ENCODE measurements at regions of chr14 and their contacts with region 1.

Region 1: GRCh38 chr14:71320107-71320733 is 413.0 kb downstream of the PCNX1 start:
- DNase-seq: peak; percentile 91 to 98
- H3K4me3 ChIP-seq: peak within 1 kb of the TSS; percentile 87 to 95
- H3K27ac ChIP-seq: peak within 1 kb of the TSS; percentile 94 to 99
- H3K4me1 ChIP-seq: peaks cover 0 to 8% of the 10 kb centered on the region in 2 donors
- H3K27me3 ChIP-seq: no peaks in the 10 kb centered on the region
- CTCF ChIP-seq: no peak

Region 2: DNA sequence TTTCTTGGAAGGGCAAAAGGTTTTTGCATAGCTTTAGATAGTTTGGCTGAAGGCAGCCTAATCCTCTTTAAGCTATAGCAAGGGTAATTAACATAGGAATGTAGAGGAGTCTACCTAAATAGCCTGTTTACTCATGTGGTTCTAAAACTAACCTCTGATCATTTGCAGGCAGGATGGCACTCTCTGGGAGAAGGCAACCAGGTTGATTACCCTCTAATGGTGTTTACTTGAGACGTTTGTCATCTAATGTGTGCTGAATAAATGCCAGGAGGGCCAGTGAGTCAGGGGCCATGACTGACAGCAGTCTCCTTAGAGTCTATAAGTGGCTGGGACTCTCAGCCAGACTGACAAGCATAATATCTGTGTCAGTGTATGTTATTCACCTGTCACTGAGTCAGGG is 126.6 kb before region 1 on chr14:
- intact Hi-C with region 1: no loop called
- DNase-seq: no peak
- H3K4me3 ChIP-seq: no peak overlapping the region
- H3K27ac ChIP-seq: no peak overlapping the region
- H3K4me1 ChIP-seq: no peaks in the 10 kb centered on the region
- H3K27me3 ChIP-seq: no peaks in the 10 kb centered on the region
- CTCF ChIP-seq: no peak

Region 3: DNA sequence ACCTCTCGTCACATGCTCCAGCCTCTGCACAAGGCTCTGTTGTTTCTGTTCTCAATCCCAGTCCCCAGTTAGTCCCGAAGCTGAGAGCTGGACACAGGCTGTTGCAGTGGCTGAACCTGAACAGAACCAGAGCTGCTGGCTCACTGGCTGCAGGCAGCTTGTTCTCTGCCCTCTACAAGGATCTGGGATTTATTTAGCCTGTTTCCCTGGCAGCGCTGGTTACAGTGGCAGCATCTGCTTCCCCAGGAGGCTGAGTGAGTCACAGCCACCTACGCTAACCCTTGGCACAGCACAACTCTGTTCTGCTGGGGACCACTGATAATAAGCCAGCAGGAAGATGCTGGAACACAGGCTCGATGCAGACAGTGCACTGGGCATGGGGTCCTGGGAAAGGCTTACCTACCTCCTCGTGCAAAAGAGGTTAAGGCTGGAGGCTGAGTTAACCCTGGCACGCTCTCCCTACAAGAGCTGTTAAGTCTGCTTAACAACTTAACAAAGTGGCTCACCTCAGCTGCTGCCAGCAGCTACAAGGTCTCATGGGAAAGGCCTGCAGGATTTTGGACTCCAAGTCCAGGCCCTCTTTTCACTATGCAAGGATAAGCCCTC is 113.4 kb before region 1 on chr14:
- intact Hi-C with region 1: no loop called
- DNase-seq: peak; percentile 33 to 83
- H3K4me3 ChIP-seq: no peak overlapping the region
- H3K27ac ChIP-seq: peak overlapping the region; percentile 3 to 8
- H3K4me1 ChIP-seq: peaks cover 0 to 5% of the 10 kb centered on the region in 2 donors
- H3K27me3 ChIP-seq: no peaks in the 10 kb centered on the region
- CTCF ChIP-seq: no peak

Region 4: GRCh38 chr14:71355324-71356201 is 35.3 kb after region 1 on chr14:
- intact Hi-C with region 1: loop called (anchors 1 kb)
- DNase-seq: no peak
- H3K4me3 ChIP-seq: peak overlapping the region in 1 of 2 donors; percentile 20
- H3K27ac ChIP-seq: peak overlapping the region; percentile 60 to 74
- H3K4me1 ChIP-seq: peaks cover 0 to 20% of the 10 kb centered on the region in 2 donors
- H3K27me3 ChIP-seq: no peaks in the 10 kb centered on the region
- CTCF ChIP-seq: no peak

Region 5: GRCh38 chr14:71529848-71530247 is 209.6 kb after region 1 on chr14:
- intact Hi-C with region 1: loop called (anchors 2 kb)
- DNase-seq: peak; percentile 9 to 86
- H3K4me3 ChIP-seq: peak overlapping the region; percentile 17 to 24
- H3K27ac ChIP-seq: peak overlapping the region; percentile 71 to 83
- H3K4me1 ChIP-seq: peaks cover 0 to 30% of the 10 kb centered on the region in 2 donors
- H3K27me3 ChIP-seq: no peaks in the 10 kb centered on the region
- CTCF ChIP-seq: no peak

Region 6: GRCh38 chr14:71555654-71556559 is 235.7 kb after region 1 on chr14:
- intact Hi-C with region 1: no loop called
- DNase-seq: no peak
- H3K4me3 ChIP-seq: no peak overlapping the region
- H3K27ac ChIP-seq: peak overlapping the region; percentile 32 to 36
- H3K4me1 ChIP-seq: peaks cover 0 to 6% of the 10 kb centered on the region in 2 donors
- H3K27me3 ChIP-seq: no peaks in the 10 kb centered on the region
- CTCF ChIP-seq: no peak

Region 7: GRCh38 chr14:71711619-71712018 is 391.4 kb after region 1 on chr14:
- intact Hi-C with region 1: loop called (anchors 1 kb)
- DNase-seq: peak in 1 of 2 donors; percentile 75
- H3K4me3 ChIP-seq: no peak overlapping the region
- H3K27ac ChIP-seq: peak overlapping the region; percentile 63 to 78
- H3K4me1 ChIP-seq: peaks cover 11 to 21% of the 10 kb centered on the region in 2 donors
- H3K27me3 ChIP-seq: no peaks in the 10 kb centered on the region
- CTCF ChIP-seq: no peak

Measured in ascending aorta (tissue), 2 donors.